ENCODE measurements at regions of chr6 and their contacts with region 1.

Region 1: GRCh38 chr6:42879372-42880239 is at the start of gene RPL7L1:
- DNase-seq: peak; percentile 74 to 89 (median 80)
- ATAC-seq: peak; percentile 91 to 94 (median 93)
- H3K4me3 ChIP-seq: peak within 1 kb of the TSS; percentile 60 to 72
- H3K4me3 Mint-ChIP-seq: peak within 1 kb of the TSS; percentile 95 to 100 (median 96)
- H3K27ac ChIP-seq: peak within 1 kb of the TSS; percentile 81
- H3K27ac Mint-ChIP-seq: peak within 1 kb of the TSS; percentile 98 to 100
- H3K4me1 ChIP-seq: peaks cover 0 to 32% of the 10 kb centered on the region in 2 experiments
- H3K4me1 Mint-ChIP-seq: peaks cover 21 to 36% (median 27%) of the 10 kb centered on the region in 3 donors
- H3K27me3 ChIP-seq: no peaks in the 10 kb centered on the region
- H3K27me3 Mint-ChIP-seq: no peaks in the 10 kb centered on the region
- total RNA-seq, gene RPL7L1: 62.5 to 89.2 (median 81.3) TPM

Region 2: DNA sequence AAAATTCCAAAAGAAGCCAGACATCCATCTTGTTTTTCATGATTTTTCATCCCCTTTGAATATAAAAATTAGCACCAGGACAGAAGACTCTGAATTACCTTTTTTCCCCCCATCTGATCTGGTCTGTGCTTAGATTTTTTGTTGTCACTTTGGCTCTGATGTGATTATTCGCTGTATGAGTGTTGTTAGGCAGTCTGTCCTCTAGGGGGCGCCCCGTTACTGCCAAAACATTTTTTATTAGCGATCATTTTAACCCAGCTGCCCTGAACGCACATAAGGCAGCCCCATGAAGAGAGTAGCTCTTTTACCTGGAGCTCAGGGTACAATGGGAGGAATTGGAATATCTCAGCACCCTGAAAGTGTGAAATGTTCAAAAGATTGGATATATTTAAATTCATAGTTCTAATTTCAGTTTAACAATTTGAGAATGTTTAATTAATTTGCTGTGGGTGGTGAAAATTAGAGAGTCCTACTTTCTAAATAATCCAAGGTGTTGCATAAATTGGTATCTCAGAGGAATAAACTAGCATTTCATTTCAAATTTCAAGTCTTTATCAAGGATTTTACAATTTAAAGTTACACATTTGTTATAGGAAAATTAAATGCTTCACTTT is 218.0 kb before region 1 on chr6:
- CTCF ChIA-PET with region 1: interaction called in 1 of 2 experiments, 35 read pairs
- POLR2A ChIA-PET with region 1: interaction called in 1 of 2 experiments, 3 read pairs
- DNase-seq: peak; percentile 66 to 89 (median 83)
- ATAC-seq: peak; percentile 87 to 96 (median 91)
- H3K4me3 ChIP-seq: no peak overlapping the region
- H3K4me3 Mint-ChIP-seq: no peak overlapping the region
- H3K27ac ChIP-seq: no peak overlapping the region
- H3K27ac Mint-ChIP-seq: peak overlapping the region; percentile 5 to 12
- H3K4me1 ChIP-seq: peaks cover 0 to 2% of the 10 kb centered on the region in 2 experiments
- H3K4me1 Mint-ChIP-seq: peaks cover 0 to 3% (median 0%) of the 10 kb centered on the region in 3 donors
- H3K27me3 ChIP-seq: no peaks in the 10 kb centered on the region
- H3K27me3 Mint-ChIP-seq: no peaks in the 10 kb centered on the region

Region 3: DNA sequence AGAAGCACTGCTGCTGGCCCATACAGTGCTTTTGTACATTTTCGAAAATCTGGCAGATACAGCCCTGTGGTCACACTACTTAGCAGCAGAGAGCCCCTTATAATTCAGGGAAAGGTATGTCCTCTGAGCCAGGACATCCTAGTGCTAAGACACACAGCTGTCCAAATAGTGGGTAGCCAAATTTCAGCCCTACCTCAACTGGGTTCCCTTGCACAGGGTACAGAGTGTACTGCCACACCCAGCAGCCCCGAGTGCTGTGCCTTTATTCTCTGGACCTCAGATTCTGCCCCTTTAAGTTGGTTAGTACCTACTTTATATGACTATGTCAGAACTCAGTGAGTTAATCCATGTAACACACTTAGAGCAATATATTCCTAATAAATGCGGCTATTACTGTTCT is 204.8 kb before region 1 on chr6:
- CTCF ChIA-PET with region 1: no interaction called
- POLR2A ChIA-PET with region 1: interaction called in 1 of 2 experiments, 10 read pairs
- DNase-seq: no peak
- ATAC-seq: no peak
- H3K4me3 ChIP-seq: no peak overlapping the region
- H3K4me3 Mint-ChIP-seq: no peak overlapping the region
- H3K27ac ChIP-seq: no peak overlapping the region
- H3K27ac Mint-ChIP-seq: no peak overlapping the region
- H3K4me1 ChIP-seq: no peaks in the 10 kb centered on the region
- H3K4me1 Mint-ChIP-seq: no peaks in the 10 kb centered on the region
- H3K27me3 ChIP-seq: no peaks in the 10 kb centered on the region
- H3K27me3 Mint-ChIP-seq: no peaks in the 10 kb centered on the region

Region 4: GRCh38 chr6:42704241-42704936 is 175.2 kb before region 1 on chr6:
- CTCF ChIA-PET with region 1: interaction called in 1 of 2 experiments, 14 read pairs
- POLR2A ChIA-PET with region 1: no interaction called
- DNase-seq: no peak
- ATAC-seq: no peak
- H3K4me3 ChIP-seq: no peak overlapping the region
- H3K4me3 Mint-ChIP-seq: no peak overlapping the region
- H3K27ac ChIP-seq: no peak overlapping the region
- H3K27ac Mint-ChIP-seq: no peak overlapping the region
- H3K4me1 ChIP-seq: no peaks in the 10 kb centered on the region
- H3K4me1 Mint-ChIP-seq: no peaks in the 10 kb centered on the region
- H3K27me3 ChIP-seq: peaks cover 0 to 6% of the 10 kb centered on the region in 2 experiments
- H3K27me3 Mint-ChIP-seq: no peaks in the 10 kb centered on the region

Region 5: DNA sequence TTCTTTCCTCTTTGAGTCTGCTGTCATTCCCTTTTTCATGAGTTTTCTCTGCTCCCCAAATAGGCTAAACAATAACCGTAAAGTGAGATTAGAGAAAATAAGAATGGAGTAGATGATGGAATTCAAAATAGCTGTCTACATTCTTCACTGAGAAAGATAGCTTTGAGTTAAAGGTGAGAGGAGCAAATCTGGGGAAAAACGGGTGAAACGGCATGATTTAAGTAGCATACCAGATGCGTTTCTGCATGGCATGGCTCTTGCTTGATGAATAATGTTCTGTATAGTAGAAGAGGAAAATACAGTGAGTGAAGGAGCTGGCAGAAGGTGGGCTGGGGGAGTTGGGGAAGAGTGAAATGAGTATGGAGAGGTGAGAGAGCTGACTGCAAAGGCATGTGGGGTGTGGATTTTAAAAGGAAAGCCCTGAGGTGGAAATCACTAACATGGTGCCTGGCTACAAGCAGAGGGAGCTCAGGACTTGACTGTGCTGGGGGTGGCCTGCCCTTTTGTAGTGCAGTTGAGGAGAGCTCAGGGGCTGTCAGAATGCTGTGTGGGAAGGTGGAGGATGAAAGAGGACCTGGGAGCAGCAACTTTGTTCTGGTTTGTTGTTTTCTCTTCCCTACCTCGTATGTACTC is 88.9 kb before region 1 on chr6:
- CTCF ChIA-PET with region 1: interaction called in 1 of 2 experiments, 4 read pairs
- POLR2A ChIA-PET with region 1: interaction called, 5 to 10 read pairs
- DNase-seq: peak in 1 of 35 experiments; percentile 27
- ATAC-seq: peak in 1 of 4 experiments; percentile 19
- H3K4me3 ChIP-seq: no peak overlapping the region
- H3K4me3 Mint-ChIP-seq: no peak overlapping the region
- H3K27ac ChIP-seq: peak overlapping the region; percentile 30
- H3K27ac Mint-ChIP-seq: peak overlapping the region; percentile 74 to 78
- H3K4me1 ChIP-seq: peaks cover 33 to 46% of the 10 kb centered on the region in 2 experiments
- H3K4me1 Mint-ChIP-seq: peaks cover 6 to 29% (median 19%) of the 10 kb centered on the region in 3 donors
- H3K27me3 ChIP-seq: no peaks in the 10 kb centered on the region
- H3K27me3 Mint-ChIP-seq: no peaks in the 10 kb centered on the region

Region 6: GRCh38 chr6:42831237-42831636 is 48.4 kb before region 1 on chr6:
- CTCF ChIA-PET with region 1: no interaction called
- POLR2A ChIA-PET with region 1: no interaction called
- DNase-seq: no peak
- ATAC-seq: no peak
- H3K4me3 ChIP-seq: no peak overlapping the region
- H3K4me3 Mint-ChIP-seq: no peak overlapping the region
- H3K27ac ChIP-seq: no peak overlapping the region
- H3K27ac Mint-ChIP-seq: no peak overlapping the region
- H3K4me1 ChIP-seq: peaks cover 0 to 2% of the 10 kb centered on the region in 2 experiments
- H3K4me1 Mint-ChIP-seq: peaks cover 16 to 24% (median 21%) of the 10 kb centered on the region in 3 donors
- H3K27me3 ChIP-seq: no peaks in the 10 kb centered on the region
- H3K27me3 Mint-ChIP-seq: no peaks in the 10 kb centered on the region

Region 7: GRCh38 chr6:42864602-42865001 is 15.0 kb before region 1 on chr6:
- CTCF ChIA-PET with region 1: no interaction called
- POLR2A ChIA-PET with region 1: no interaction called
- DNase-seq: no peak
- ATAC-seq: no peak
- H3K4me3 ChIP-seq: no peak overlapping the region
- H3K4me3 Mint-ChIP-seq: no peak overlapping the region
- H3K27ac ChIP-seq: no peak overlapping the region
- H3K27ac Mint-ChIP-seq: no peak overlapping the region
- H3K4me1 ChIP-seq: no peaks in the 10 kb centered on the region
- H3K4me1 Mint-ChIP-seq: no peaks in the 10 kb centered on the region
- H3K27me3 ChIP-seq: no peaks in the 10 kb centered on the region
- H3K27me3 Mint-ChIP-seq: no peaks in the 10 kb centered on the region

Region 8: GRCh38 chr6:42890311-42891198 is 10.9 kb after region 1 on chr6:
- CTCF ChIA-PET with region 1: interaction called in 1 of 2 experiments, 3 read pairs
- POLR2A ChIA-PET with region 1: interaction called, 6 to 29 read pairs
- DNase-seq: peak; percentile 73 to 90 (median 84)
- ATAC-seq: peak; percentile 93 to 97 (median 96)
- H3K4me3 ChIP-seq: peak overlapping the region; percentile 84 to 91
- H3K4me3 Mint-ChIP-seq: peak overlapping the region; percentile 88 to 96 (median 92)
- H3K27ac ChIP-seq: peak overlapping the region; percentile 76
- H3K27ac Mint-ChIP-seq: peak overlapping the region; percentile 96 to 99
- H3K4me1 ChIP-seq: peaks cover 9 to 13% of the 10 kb centered on the region in 2 experiments
- H3K4me1 Mint-ChIP-seq: peaks cover 5 to 20% (median 18%) of the 10 kb centered on the region in 3 donors
- H3K27me3 ChIP-seq: no peaks in the 10 kb centered on the region
- H3K27me3 Mint-ChIP-seq: no peaks in the 10 kb centered on the region

Region 9: GRCh38 chr6:43149265-43149664 is 269.7 kb after region 1 on chr6:
- CTCF ChIA-PET with region 1: interaction called, 3 to 11 read pairs
- POLR2A ChIA-PET with region 1: no interaction called
- DNase-seq: no peak
- ATAC-seq: no peak
- H3K4me3 ChIP-seq: no peak overlapping the region
- H3K4me3 Mint-ChIP-seq: no peak overlapping the region
- H3K27ac ChIP-seq: no peak overlapping the region
- H3K27ac Mint-ChIP-seq: no peak overlapping the region
- H3K4me1 ChIP-seq: no peaks in the 10 kb centered on the region
- H3K4me1 Mint-ChIP-seq: no peaks in the 10 kb centered on the region
- H3K27me3 ChIP-seq: peaks cover 0 to 2% of the 10 kb centered on the region in 2 experiments
- H3K27me3 Mint-ChIP-seq: peaks cover 0 to 3% of the 10 kb centered on the region in 2 donors